Activated CD8-positive, alpha-beta T cell treated with anti-CD3 and anti-CD28 coated beads, Interleukin-2, amount 10 ng/mL, durations not matched to agents 7 days and 5 days (primary cell): ENCODE measurements at regions of chr17 and their contacts with region 1.

Region 1: DNA sequence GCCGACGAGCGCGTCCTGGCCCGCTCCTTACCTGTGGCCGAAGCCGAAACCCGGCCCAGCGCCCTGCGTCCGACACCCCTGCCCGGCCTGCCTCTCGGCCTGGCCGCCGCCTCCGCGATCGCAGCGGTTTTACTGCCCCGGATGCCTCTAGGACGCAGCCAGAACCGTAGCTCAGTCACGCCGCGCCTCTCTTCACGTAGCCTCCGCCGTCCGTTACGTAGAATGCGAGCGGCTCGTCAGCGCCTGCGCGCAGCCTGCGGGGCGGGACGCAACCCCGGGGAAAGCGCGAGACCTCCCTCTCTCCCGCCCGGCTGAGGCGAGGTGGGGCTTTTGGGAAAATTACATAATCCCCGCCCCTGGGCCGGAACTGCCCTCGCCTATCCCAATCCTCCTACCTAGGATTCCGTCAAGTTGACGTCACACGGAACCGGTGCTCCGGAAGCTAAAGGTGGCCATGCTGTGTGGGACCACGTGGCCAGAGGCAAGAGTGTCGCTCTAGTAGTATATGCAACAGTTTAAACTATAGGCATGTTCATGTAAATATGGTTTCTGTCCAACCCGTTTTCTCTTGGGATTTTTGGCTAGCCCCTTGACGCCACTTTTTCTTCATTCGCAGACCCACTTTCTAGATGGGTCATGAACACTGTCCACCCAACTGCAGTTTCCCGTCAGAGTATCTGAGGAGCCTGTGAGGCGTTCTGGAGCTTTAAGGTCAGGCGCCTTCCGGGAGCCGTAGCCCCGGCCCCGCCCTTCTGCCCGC is at the start of gene CCDC47:
- DNase-seq: peak; percentile 99
- ATAC-seq: peak; percentile 92
- H3K4me3 Mint-ChIP-seq: peak within 1 kb of the TSS; percentile 98
- H3K27ac Mint-ChIP-seq: peak within 1 kb of the TSS; percentile 100
- H3K4me1 Mint-ChIP-seq: peaks cover 49% of the 10 kb centered on the region
- H3K27me3 Mint-ChIP-seq: no peaks in the 10 kb centered on the region
- total RNA-seq, gene CCDC47: 59.4 to 61.1 TPM

Region 2: GRCh38 chr17:63564562-63564961 is 209.0 kb before region 1 on chr17:
- CTCF ChIA-PET with region 1: no interaction called
- POLR2A ChIA-PET with region 1: no interaction called
- DNase-seq: no peak
- ATAC-seq: no peak
- H3K4me3 Mint-ChIP-seq: no peak overlapping the region
- H3K27ac Mint-ChIP-seq: no peak overlapping the region
- H3K4me1 Mint-ChIP-seq: peaks cover 11% of the 10 kb centered on the region
- H3K27me3 Mint-ChIP-seq: no peaks in the 10 kb centered on the region

Region 3: DNA sequence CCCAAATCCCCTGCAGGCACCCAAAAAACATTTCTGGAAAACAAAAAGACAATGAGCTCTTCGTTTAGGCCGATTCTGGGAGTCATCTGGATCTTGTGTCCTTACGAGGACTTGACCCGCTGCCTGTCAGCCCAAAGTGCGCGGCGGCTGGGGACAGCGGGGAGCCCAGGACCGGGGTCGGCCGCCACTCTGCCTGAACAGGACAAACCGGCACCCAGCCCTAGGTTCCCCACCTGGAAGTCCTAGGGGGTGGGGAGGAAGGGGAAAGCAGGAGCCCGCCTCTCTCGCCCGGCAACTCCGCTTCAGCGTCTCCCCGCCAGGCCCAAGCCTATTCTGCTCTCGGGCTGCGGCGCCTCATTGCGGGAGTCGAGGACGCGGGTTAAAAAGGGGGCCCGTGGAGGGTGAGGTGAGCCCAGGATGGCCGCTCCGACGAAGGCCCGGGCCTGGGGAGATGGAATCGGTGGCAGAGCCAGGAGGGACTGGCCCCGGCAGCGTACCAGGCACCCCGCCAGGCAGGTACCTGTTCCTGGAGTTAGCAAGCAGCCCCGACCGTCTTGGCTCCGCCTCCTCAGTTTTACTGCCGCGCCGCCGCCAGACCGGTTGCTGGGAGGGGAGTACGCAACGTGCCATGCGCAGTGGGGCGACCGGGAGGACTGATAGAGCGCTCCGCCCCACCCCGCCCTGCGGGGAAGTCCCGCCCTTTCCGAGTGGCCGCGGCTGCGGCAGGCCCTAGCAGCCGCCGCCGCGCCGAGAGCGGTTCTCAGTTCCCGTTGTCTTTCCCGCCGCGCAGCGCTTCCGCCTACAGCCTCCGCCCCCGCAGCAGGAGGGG is 32.1 kb before region 1 on chr17 and contains the start of gene STRADA:
- CTCF ChIA-PET with region 1: interaction called, 13 read pairs
- POLR2A ChIA-PET with region 1: interaction called, 38 read pairs
- DNase-seq: peak; percentile 99
- ATAC-seq: peak; percentile 96
- H3K4me3 Mint-ChIP-seq: peak within 1 kb of the TSS; percentile 94
- H3K27ac Mint-ChIP-seq: peak within 1 kb of the TSS; percentile 92
- H3K4me1 Mint-ChIP-seq: peaks cover 41% of the 10 kb centered on the region
- H3K27me3 Mint-ChIP-seq: no peaks in the 10 kb centered on the region
- total RNA-seq, gene STRADA: 46.0 to 49.9 TPM

Region 4: DNA sequence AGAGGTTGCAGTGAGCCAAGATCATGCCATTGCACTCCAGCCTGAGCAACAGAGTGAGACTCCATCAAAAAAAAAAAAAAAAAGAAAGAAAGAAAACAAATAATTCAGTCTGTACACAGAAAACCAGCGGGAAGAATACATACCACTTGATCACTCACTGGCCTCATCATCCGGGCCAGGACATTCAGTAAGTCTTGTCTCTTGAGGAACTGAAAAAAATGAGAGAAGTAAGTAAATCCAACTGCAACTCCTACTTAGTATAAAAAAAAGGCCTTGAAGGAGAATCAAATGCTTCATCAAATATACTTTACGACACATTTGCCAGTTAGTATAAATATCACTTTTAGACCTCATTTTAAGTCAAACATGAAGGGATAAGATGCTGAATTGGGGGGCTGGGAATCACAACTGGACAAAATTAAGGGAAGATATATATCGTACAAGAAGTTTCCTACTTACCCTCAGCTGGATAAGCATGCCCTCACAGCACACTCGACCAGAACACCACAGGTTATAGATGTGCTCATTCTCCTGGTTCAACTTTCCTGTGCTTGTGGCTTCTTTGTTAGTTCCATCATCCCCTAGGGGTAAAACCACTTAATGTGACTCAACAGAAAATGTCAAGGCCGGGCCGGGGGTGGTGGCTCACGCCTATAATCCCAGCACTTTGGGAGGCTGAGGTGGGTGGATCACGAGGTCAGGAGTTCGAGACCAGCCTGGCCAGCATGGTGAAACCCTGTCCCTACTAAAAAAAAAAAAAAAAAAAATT is 12.6 kb before region 1 on chr17:
- CTCF ChIA-PET with region 1: interaction called, 15 read pairs
- POLR2A ChIA-PET with region 1: interaction called, 18 read pairs
- DNase-seq: peak; percentile 20
- ATAC-seq: peak; percentile 47
- H3K4me3 Mint-ChIP-seq: no peak overlapping the region
- H3K27ac Mint-ChIP-seq: peak overlapping the region; percentile 63
- H3K4me1 Mint-ChIP-seq: peaks cover 17% of the 10 kb centered on the region
- H3K27me3 Mint-ChIP-seq: no peaks in the 10 kb centered on the region

Region 5: DNA sequence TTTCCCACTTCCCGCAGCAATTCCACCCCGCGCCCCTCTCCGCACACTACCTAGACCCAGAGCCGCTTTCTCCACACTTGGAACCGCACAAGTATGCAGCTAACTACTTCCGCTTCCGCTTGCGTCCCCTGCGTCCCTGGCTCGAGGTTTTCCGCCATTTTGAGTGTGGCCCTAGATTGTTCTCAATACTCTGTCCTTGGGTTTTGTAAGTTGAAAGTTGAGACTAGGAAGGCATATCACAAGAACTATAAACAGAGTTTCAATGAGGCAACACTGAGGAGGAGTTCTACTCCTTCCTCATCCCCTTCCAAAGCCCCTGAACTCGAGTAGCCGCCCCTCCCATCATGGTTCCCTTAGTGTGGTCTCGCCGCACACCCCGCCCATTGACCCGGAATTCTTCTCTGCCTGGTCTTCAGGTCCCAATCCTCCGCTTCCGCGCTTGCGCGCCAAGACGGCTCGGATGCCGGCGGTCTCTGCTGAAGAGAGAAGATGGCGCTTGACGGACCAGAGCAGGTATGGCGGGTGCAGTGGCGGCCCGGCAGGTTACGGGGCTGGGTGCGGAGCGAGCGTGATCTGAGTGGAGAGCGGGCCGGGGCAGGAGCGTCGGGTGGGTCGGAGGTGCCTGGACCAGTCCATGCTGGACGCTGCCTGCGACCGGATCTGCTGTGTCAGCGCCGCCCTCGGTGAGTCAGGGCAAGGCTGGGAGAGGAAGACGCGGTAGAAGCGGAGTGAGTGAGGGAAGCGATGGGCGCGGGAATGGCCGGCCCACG is 53.6 kb after region 1 on chr17 and contains the starts of genes FTSJ3 and PSMC5:
- CTCF ChIA-PET with region 1: interaction called, 8 read pairs
- POLR2A ChIA-PET with region 1: interaction called, 28 read pairs
- DNase-seq: peak; percentile 97
- ATAC-seq: peak; percentile 94
- H3K4me3 Mint-ChIP-seq: peak within 1 kb of the TSS; percentile 97
- H3K27ac Mint-ChIP-seq: peak within 1 kb of the TSS; percentile 100
- H3K4me1 Mint-ChIP-seq: peaks cover 81% of the 10 kb centered on the region
- H3K27me3 Mint-ChIP-seq: no peaks in the 10 kb centered on the region
- total RNA-seq, gene FTSJ3: 58.7 to 62.2 TPM
- total RNA-seq, gene PSMC5: 176 to 179 TPM

Region 6: DNA sequence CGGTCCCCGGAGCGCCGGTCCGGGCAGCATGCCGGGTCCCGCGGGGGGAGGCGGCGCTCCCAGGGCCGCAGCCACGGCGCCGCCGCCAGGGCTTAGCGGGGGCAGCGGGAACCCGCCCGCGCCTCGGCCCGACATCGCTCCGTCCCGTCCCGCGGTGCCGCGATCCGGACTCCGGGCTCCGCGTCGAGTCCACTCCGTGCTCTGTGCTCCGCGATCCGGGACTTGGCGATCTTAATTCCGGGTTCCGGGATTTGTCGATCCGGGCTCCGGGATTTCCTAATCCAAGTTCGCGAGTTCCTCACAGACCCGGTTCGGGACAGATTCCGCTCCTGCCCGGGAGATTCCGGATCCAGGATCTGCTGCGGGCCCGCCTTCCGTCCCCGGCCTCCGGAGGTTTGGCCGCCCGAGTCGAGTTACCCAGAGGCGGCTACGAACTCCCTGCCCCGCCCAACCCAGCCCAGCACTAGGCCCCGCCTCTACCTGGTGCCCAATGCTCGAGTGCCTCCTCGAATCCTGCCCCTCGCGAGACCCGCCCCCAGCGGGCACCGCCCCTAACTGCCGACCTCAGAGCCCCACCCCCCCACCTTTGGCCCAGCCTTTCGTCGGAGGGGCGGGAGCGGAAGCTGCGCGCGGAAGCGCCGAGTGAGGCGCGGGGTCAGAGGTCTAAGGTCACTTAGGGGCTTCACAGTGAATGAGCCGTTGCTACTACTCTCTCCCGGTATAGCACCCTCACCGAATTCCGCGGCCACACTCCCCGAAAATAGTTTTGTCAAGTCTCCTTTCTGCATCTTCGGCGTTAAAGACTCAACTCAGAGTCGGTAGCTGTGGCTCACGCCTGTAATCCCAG is 69.2 kb after region 1 on chr17 and contains the start of gene SMARCD2:
- CTCF ChIA-PET with region 1: interaction called, 3 read pairs
- POLR2A ChIA-PET with region 1: interaction called, 12 read pairs
- DNase-seq: peak; percentile 99
- ATAC-seq: peak; percentile 90
- H3K4me3 Mint-ChIP-seq: peak within 1 kb of the TSS; percentile 97
- H3K27ac Mint-ChIP-seq: peak within 1 kb of the TSS; percentile 94
- H3K4me1 Mint-ChIP-seq: peaks cover 36% of the 10 kb centered on the region
- H3K27me3 Mint-ChIP-seq: no peaks in the 10 kb centered on the region
- total RNA-seq, gene SMARCD2: 130 to 136 TPM

Region 7: DNA sequence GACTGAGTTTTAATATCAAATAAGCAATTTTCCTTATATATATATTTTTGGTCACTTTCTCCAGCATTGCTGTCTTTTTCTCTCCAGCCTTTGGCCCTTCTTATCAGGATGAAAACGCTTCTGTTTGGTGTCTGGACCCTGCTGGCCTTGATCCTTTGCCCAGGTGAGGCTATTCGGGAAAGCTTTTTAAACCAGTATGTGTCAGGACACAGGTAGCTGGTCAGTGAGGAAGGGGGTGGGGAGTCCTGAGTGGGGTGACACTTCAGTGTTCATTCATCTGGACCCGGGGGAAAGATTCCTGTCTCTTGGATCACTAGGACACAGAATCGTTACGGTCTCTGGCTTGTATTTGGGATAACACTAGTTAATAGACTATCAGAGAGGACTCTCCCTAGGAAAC is 81.1 kb after region 1 on chr17:
- CTCF ChIA-PET with region 1: no interaction called
- POLR2A ChIA-PET with region 1: no interaction called
- DNase-seq: no peak
- ATAC-seq: no peak
- H3K4me3 Mint-ChIP-seq: no peak overlapping the region
- H3K27ac Mint-ChIP-seq: no peak overlapping the region
- H3K4me1 Mint-ChIP-seq: peaks cover 1% of the 10 kb centered on the region
- H3K27me3 Mint-ChIP-seq: peaks cover 22% of the 10 kb centered on the region

Region 8: GRCh38 chr17:63919311-63919723 is 145.8 kb after region 1 on chr17:
- CTCF ChIA-PET with region 1: no interaction called
- POLR2A ChIA-PET with region 1: no interaction called
- DNase-seq: peak; percentile 79
- ATAC-seq: peak; percentile 93
- H3K4me3 Mint-ChIP-seq: no peak overlapping the region
- H3K27ac Mint-ChIP-seq: peak overlapping the region; percentile 47
- H3K4me1 Mint-ChIP-seq: peaks cover 8% of the 10 kb centered on the region
- H3K27me3 Mint-ChIP-seq: peaks cover 16% of the 10 kb centered on the region

Region 9: GRCh38 chr17:63931099-63931561 is 157.6 kb after region 1 on chr17:
- CTCF ChIA-PET with region 1: no interaction called
- POLR2A ChIA-PET with region 1: no interaction called
- DNase-seq: peak; percentile 75
- ATAC-seq: peak; percentile 80
- H3K4me3 Mint-ChIP-seq: peak overlapping the region; percentile 93
- H3K27ac Mint-ChIP-seq: peak overlapping the region; percentile 82
- H3K4me1 Mint-ChIP-seq: peaks cover 29% of the 10 kb centered on the region
- H3K27me3 Mint-ChIP-seq: peaks cover 10% of the 10 kb centered on the region